GM10248 (cell line): ENCODE measurements at regions of chr9 and their contacts with region 1.

Region 1: DNA sequence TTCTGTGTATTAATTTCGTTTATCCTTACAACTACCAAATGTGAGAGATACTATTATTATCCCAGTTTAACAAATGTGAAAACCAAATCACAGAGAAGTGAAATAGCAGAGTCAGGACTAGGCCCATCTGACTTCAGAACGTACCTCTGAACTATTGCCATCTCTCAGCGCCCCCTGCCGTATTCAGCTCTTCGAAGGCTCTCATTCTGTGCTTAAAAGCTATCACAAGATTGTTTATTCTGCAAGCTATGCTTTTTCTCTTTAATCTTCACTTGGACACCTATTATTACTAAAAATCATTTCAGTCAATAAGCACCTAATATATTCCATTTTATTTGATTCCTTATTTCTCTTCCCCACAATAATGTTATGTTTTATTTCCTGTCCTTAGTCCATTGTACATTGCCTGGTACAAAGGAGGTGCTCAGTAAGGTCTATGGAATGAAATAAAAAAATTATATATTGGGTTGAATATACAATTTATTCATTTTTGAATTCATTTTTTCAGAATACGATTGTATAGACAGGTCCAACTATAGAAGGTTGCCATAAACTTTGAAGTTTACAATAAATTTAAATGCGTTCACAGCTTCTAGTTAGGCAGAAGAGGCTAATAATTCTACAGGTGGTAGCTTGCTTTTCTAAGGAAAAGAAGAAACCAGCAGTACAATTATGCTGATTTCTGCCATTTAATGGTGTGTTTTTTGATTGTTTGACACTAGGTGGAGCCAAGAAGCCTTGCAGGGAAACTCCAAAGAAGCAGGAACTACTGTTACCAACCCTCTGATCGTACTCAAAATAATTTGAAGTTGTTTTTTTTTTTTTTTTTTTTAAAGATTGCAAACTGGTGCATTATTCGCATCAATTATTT is 202.2 kb upstream of the DMRTA1 start:
- DNase-seq: peak; percentile 14
- CTCF ChIP-seq: peak; percentile 67

Region 2: DNA sequence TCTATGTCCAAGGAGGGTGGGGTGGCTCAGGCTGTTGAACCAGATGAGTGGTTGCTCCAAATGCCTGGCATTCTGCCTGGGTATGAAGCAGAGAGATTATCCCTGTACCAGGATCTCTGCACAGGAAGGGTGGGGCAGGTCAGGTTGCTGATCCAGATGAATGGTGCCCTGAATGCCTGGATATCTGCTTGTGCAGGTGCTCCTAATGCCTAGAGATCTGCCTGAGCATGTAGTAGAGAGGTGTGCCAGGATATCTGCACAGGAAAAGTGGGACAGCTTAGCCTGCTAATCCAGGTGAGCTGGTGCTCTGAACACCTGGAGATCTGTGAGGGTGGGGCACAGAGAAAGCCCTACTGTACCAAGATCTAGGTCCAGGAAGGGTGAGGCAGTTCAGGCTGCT is 12.7 kb after region 1 on chr9:
- CTCF ChIA-PET with region 1: interaction called, 13 read pairs
- POLR2A ChIA-PET with region 1: no interaction called
- DNase-seq: no peak
- CTCF ChIP-seq: no peak